Thyroid gland (tissue), 4 donors: ENCODE measurements at regions of chr16 and their contacts with region 1.

Region 1: GRCh38 chr16:1926271-1926670 is 8.1 kb upstream of the HS3ST6 start:
- DNase-seq: peak in 1 of 2 donors; percentile 23
- H3K4me3 ChIP-seq: no peak overlapping the region
- H3K27ac ChIP-seq: peak overlapping the region in 1 of 3 donors; percentile 10
- H3K4me1 ChIP-seq: peaks cover 0 to 19% of the 10 kb centered on the region in 2 donors
- H3K27me3 ChIP-seq: no peaks in the 10 kb centered on the region
- CTCF ChIP-seq: no peak
- POLR2A ChIP-seq: no peak

Region 2: DNA sequence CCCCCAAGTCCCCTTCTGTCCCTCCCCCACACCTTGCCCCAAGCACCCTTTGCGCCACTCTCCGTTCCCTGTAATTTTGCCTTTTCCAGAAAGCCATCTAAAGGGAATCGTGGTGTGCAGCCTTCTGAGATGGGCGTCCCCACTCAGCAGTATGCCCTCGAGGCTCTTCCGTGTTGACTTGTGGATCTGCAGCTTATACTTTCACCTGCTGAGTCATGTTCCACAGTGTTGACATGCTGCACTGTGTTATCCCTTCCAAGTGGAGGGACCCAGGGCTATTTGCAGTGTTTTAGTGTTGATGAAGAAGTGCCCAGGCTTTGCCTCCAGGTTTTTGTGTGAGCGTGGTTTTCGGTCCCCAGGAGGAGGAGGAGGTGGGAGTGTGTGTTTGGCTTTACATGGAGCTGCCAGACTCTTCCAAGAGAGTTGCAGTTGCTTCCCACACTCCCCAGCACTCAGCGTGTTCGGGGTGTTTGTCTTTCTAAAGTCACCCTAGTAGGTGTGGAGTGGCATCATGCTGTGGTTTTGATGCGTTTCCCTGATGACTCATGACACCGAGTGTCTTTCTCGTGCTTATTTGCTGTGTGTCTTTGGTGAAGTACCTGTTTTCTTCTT is 280.3 kb before region 1 on chr16:
- intact Hi-C with region 1: no loop called
- DNase-seq: no peak
- H3K4me3 ChIP-seq: no peak overlapping the region
- H3K27ac ChIP-seq: no peak overlapping the region
- H3K4me1 ChIP-seq: no peaks in the 10 kb centered on the region
- H3K27me3 ChIP-seq: no peaks in the 10 kb centered on the region
- CTCF ChIP-seq: no peak
- POLR2A ChIP-seq: no peak

Region 3: GRCh38 chr16:1794221-1794860 is 131.9 kb before region 1 on chr16:
- intact Hi-C with region 1: no loop called
- DNase-seq: peak; percentile 79 to 80
- H3K4me3 ChIP-seq: no peak overlapping the region
- H3K27ac ChIP-seq: peak overlapping the region in 1 of 3 donors; percentile 2
- H3K4me1 ChIP-seq: peaks cover 11 to 12% of the 10 kb centered on the region in 2 donors
- H3K27me3 ChIP-seq: no peaks in the 10 kb centered on the region
- CTCF ChIP-seq: no peak
- POLR2A ChIP-seq: no peak

Region 4: GRCh38 chr16:1863681-1864460 is 62.4 kb before region 1 on chr16:
- intact Hi-C with region 1: loop called (anchors 2 kb)
- DNase-seq: peak; percentile 8 to 17
- H3K4me3 ChIP-seq: no peak overlapping the region
- H3K27ac ChIP-seq: no peak overlapping the region
- H3K4me1 ChIP-seq: no peaks in the 10 kb centered on the region
- H3K27me3 ChIP-seq: no peaks in the 10 kb centered on the region
- CTCF ChIP-seq: peak; percentile 33 to 79 (median 47)
- POLR2A ChIP-seq: no peak